ENCODE measurements at regions of chr1 and their contacts with region 1.

Region 1: GRCh38 chr1:110760321-110760720 is 85.6 kb upstream of the KCNA3 start:
- DNase-seq: no peak
- ATAC-seq: no peak
- H3K4me3 ChIP-seq: no peak overlapping the region
- H3K4me3 Mint-ChIP-seq: no peak overlapping the region
- H3K27ac ChIP-seq: no peak overlapping the region
- H3K27ac Mint-ChIP-seq: no peak overlapping the region
- H3K4me1 ChIP-seq: no peaks in the 10 kb centered on the region
- H3K4me1 Mint-ChIP-seq: no peaks in the 10 kb centered on the region
- H3K27me3 ChIP-seq: peaks cover 4 to 18% of the 10 kb centered on the region in 2 experiments
- H3K27me3 Mint-ChIP-seq: peaks cover 18% of the 10 kb centered on the region
- CTCF ChIP-seq: no peak

Region 2: DNA sequence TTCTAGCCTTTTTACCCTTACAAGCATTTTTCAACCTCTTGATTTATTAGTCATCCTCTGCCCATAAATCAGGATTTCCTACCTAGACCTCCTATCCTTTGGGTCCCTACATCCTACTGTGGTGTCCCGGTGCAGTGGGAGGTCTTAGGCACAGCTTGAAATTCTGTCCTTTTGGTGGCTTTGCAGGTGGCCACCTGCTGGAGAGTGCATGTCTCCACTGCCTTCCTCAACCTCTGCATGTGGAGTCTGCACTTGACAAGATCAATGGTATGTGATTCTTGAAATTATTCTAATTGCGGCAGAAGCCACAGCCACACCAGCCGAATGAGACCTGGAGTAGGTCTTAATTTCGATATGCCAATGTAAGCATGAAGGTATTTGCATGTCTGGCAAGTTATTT is 74.1 kb before region 1 on chr1:
- CTCF ChIA-PET with region 1: interaction called, 5 read pairs
- POLR2A ChIA-PET with region 1: no interaction called
- intact Hi-C with region 1: loop called in 1 of 2 experiments (anchors 5 kb)
- DNase-seq: peak in 12 of 14 experiments; percentile 8 to 71 (median 32)
- ATAC-seq: peak; percentile 79
- H3K4me3 ChIP-seq: no peak overlapping the region
- H3K4me3 Mint-ChIP-seq: no peak overlapping the region
- H3K27ac ChIP-seq: no peak overlapping the region
- H3K27ac Mint-ChIP-seq: no peak overlapping the region
- H3K4me1 ChIP-seq: peaks cover 4% of the 10 kb centered on the region
- H3K4me1 Mint-ChIP-seq: no peaks in the 10 kb centered on the region
- H3K27me3 ChIP-seq: no peaks in the 10 kb centered on the region
- H3K27me3 Mint-ChIP-seq: no peaks in the 10 kb centered on the region
- CTCF ChIP-seq: peak; percentile 58